ENCODE measurements at regions of chr2 and their contacts with region 1.

Region 1: GRCh38 chr2:98909317-98910211 is 26.5 kb downstream of the CRACDL start:
- DNase-seq: peak; percentile 74
- H3K4me3 Mint-ChIP-seq: peak overlapping the region; percentile 47
- H3K27ac Mint-ChIP-seq: peak overlapping the region; percentile 86
- H3K4me1 Mint-ChIP-seq: peaks cover 67% of the 10 kb centered on the region
- H3K27me3 Mint-ChIP-seq: no peaks in the 10 kb centered on the region
- CTCF ChIP-seq: no peak

Region 2: DNA sequence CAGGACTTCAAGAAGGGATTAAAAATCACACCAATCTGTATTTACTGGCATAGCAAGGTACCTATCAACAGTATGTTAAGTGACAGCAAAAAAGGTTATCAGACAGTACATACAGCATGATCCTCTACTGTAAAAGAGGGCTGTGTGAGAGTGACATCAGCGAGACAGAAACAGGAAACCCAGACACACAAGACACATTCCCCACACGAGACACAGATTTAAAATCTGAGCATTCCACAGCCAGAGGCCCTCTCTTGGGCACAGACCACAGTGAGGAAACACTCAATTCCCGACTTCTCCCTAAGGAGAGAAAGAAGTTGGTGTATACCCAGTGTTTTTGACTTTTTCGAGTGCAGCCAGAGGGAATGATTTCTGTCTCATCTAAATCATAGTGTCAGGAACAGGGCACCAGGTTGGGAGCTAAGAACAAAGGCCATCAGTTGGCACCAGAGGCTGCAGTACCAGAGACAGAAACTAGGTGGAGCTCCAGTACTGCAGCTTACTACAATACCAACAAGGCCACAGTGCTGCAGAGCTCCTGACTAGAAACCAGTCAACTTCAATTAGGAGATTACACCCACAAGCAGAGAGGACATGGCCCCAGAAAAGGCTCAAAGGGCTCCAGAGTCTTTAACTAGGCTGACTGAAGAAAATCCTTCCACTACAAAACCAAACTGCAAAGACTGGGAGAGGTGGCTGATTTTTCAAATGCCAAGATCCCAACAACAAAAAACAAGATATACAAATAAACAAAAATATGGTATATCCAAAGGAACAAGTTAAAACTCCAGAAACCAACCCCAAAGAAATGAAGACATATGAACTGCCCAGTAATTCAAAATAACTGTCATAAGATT is 260.2 kb before region 1 on chr2:
- CTCF ChIA-PET with region 1: interaction called, 3 read pairs
- POLR2A ChIA-PET with region 1: interaction called, 5 read pairs
- intact Hi-C with region 1: loop called (anchors 10 kb)
- DNase-seq: peak; percentile 80
- H3K4me3 Mint-ChIP-seq: no peak overlapping the region
- H3K27ac Mint-ChIP-seq: no peak overlapping the region
- H3K4me1 Mint-ChIP-seq: no peaks in the 10 kb centered on the region
- H3K27me3 Mint-ChIP-seq: no peaks in the 10 kb centered on the region
- CTCF ChIP-seq: peak; percentile 97

Region 3: GRCh38 chr2:98757904-98758421 is 151.6 kb before region 1 on chr2:
- CTCF ChIA-PET with region 1: no interaction called
- POLR2A ChIA-PET with region 1: no interaction called
- intact Hi-C with region 1: no loop called
- DNase-seq: peak; percentile 95
- H3K4me3 Mint-ChIP-seq: peak overlapping the region; percentile 58
- H3K27ac Mint-ChIP-seq: peak overlapping the region; percentile 20
- H3K4me1 Mint-ChIP-seq: peaks cover 10% of the 10 kb centered on the region
- H3K27me3 Mint-ChIP-seq: no peaks in the 10 kb centered on the region
- CTCF ChIP-seq: no peak

Region 4: DNA sequence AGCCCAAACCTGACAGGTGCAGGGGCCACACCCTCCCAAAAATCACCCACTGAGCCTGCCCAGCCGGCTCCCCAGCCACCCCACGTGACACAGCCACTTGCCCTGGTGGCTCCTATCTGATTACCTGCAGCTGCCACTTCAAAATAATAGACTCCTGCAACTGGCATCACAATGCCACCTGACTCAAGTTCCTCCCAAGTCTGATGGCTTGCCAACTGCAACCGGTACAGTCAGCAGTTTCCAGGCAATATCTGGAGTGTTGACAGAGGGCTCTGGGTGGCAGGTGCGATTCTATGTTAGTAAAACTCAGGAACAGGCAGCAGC is 39.7 kb before region 1 on chr2:
- CTCF ChIA-PET with region 1: interaction called, 4 read pairs
- POLR2A ChIA-PET with region 1: interaction called, 68 read pairs
- intact Hi-C with region 1: loop called (anchors 2 kb)
- DNase-seq: peak; percentile 71
- H3K4me3 Mint-ChIP-seq: peak overlapping the region; percentile 72
- H3K27ac Mint-ChIP-seq: peak overlapping the region; percentile 99
- H3K4me1 Mint-ChIP-seq: peaks cover 36% of the 10 kb centered on the region
- H3K27me3 Mint-ChIP-seq: no peaks in the 10 kb centered on the region
- CTCF ChIP-seq: no peak

Region 5: GRCh38 chr2:98936353-98937351 is 27.1 kb after region 1 on chr2:
- CTCF ChIA-PET with region 1: interaction called, 4 read pairs
- POLR2A ChIA-PET with region 1: interaction called, 14 read pairs
- intact Hi-C with region 1: loop called (anchors 1 kb)
- DNase-seq: peak; percentile 39
- H3K4me3 Mint-ChIP-seq: peak overlapping the region; percentile 72
- H3K27ac Mint-ChIP-seq: no peak overlapping the region
- H3K4me1 Mint-ChIP-seq: peaks cover 13% of the 10 kb centered on the region
- H3K27me3 Mint-ChIP-seq: no peaks in the 10 kb centered on the region
- CTCF ChIP-seq: peak; percentile 49